Esophagus muscularis mucosa (tissue), 4 donors: ENCODE measurements at regions of chr14 and their contacts with region 1.

Region 1: GRCh38 chr14:66495218-66496098 is 9.3 kb downstream of the CCDC196 start:
- DNase-seq: no peak
- H3K4me3 ChIP-seq: peak overlapping the region in 2 of 4 donors; percentile 17 to 26
- H3K27ac ChIP-seq: no peak overlapping the region
- H3K4me1 ChIP-seq: peaks cover 0 to 15% (median 11%) of the 10 kb centered on the region in 4 donors
- H3K27me3 ChIP-seq: no peaks in the 10 kb centered on the region
- CTCF ChIP-seq: peak; percentile 64 to 78 (median 78)
- EP300 ChIP-seq: no peak
- POLR2A ChIP-seq: no peak

Region 2: DNA sequence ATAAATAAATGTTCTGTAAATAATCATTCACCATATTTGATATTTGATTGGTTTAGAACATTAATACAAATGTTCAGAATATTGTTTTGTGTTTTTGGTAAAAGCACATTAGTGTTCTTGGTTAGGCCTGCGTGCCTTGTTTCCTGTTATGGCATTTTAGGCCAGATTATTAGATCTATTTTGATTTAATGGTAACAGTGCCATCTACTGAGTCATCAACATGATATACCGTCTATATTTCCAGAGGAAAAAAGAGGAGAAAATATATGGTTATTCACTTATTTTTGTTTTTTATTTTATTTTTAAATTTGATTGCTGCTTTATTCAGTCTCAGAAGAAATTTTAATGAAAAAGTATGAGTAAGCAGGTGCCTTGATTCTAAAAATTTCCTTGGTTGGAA is 72.8 kb after region 1 on chr14:
- intact Hi-C with region 1: loop called (anchors 5 kb)
- DNase-seq: no peak
- H3K4me3 ChIP-seq: no peak overlapping the region
- H3K27ac ChIP-seq: no peak overlapping the region
- H3K4me1 ChIP-seq: peaks cover 0 to 14% (median 2%) of the 10 kb centered on the region in 4 donors
- H3K27me3 ChIP-seq: no peaks in the 10 kb centered on the region
- CTCF ChIP-seq: no peak
- EP300 ChIP-seq: no peak
- POLR2A ChIP-seq: no peak

Region 3: DNA sequence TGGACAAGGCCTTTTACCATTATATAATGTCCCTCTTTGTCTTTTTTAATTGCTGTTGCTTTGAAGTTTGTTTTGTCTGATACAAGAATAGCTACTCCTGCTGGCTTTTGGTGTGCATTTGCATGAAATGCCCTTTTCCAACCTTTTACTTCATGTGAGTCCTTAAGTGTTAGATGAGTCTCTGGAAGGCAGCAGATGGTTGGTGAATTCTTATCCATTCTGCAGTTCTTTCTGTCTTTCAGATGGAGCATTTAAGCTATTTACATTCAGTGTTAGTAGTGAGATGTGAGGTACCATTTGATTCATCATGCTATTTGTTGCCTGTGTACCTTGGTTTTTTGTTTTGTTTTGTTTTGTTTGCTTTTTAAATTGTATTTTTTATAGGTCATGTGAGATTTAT is 220.8 kb after region 1 on chr14:
- intact Hi-C with region 1: no loop called
- DNase-seq: no peak
- H3K4me3 ChIP-seq: no peak overlapping the region
- H3K27ac ChIP-seq: no peak overlapping the region
- H3K4me1 ChIP-seq: no peaks in the 10 kb centered on the region
- H3K27me3 ChIP-seq: no peaks in the 10 kb centered on the region
- CTCF ChIP-seq: no peak
- EP300 ChIP-seq: no peak
- POLR2A ChIP-seq: no peak